ENCODE measurements at regions of chr18 and their contacts with region 1.

Region 1: DNA sequence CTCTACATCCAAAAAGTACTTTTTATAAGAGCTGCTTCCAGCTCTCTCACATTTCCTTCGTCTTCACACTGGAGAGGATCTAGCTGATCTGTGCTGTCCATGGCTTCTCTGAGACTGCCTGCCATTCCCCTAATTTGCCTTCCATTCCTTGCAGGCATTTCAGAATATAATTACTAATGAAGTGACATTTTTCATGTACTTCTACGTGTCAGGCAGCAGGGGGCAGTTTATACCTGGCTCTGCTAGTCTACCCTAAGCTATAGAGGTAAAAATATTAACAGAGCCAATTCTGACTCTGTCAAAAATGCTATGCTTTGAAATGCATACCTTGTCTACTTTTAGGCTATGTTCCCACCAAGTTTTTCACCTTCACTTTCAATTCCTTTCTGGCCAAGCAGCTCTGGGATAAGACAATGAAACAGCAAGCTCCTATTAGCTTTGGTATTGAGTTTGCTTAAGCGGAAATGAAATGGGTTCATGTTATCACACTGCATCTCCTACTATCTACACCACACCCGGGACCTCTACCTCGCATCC is 81.9 kb downstream of the MEP1B start:
- DNase-seq: peak; percentile 41
- ATAC-seq: peak; percentile 53
- H3K4me3 Mint-ChIP-seq: no peak overlapping the region
- H3K27ac Mint-ChIP-seq: no peak overlapping the region
- H3K4me1 Mint-ChIP-seq: no peaks in the 10 kb centered on the region
- H3K27me3 Mint-ChIP-seq: peaks cover 11% of the 10 kb centered on the region

Region 2: GRCh38 chr18:32086861-32087260 is 184.9 kb before region 1 on chr18:
- CTCF ChIA-PET with region 1: no interaction called
- POLR2A ChIA-PET with region 1: no interaction called
- intact Hi-C with region 1: no loop called
- DNase-seq: no peak
- ATAC-seq: no peak
- H3K4me3 Mint-ChIP-seq: no peak overlapping the region
- H3K27ac Mint-ChIP-seq: no peak overlapping the region
- H3K4me1 Mint-ChIP-seq: peaks cover 34% of the 10 kb centered on the region
- H3K27me3 Mint-ChIP-seq: no peaks in the 10 kb centered on the region

Region 3: DNA sequence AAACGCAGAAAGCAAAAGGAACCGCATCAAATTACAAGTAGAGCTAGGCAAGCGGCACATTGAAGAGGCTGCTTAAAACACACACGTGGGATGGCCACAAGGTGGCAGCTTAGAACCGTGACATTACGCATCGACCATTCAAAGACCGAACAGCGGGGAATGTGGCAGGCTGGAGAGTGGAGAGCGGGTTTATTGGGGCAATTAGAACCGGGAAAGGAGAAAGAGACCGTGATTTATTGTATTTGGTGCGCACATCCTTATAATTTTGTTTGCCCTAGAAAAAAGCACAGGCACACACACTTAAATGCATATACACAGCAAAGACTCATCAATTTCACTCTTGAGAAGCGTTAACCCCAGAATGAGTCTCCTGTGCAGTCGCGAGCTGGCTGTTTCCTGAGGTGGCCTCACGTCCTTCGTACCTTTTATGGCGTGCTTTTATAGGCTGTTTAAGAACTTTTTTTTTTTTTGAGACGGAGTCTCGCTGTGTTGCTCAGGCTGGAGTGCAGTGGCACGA is 113.6 kb before region 1 on chr18:
- CTCF ChIA-PET with region 1: interaction called, 12 read pairs
- POLR2A ChIA-PET with region 1: no interaction called
- intact Hi-C with region 1: loop called (anchors 5 to 10 kb)
- DNase-seq: peak; percentile 82
- ATAC-seq: peak; percentile 92
- H3K4me3 Mint-ChIP-seq: peak overlapping the region; percentile 54
- H3K27ac Mint-ChIP-seq: no peak overlapping the region
- H3K4me1 Mint-ChIP-seq: peaks cover 4% of the 10 kb centered on the region
- H3K27me3 Mint-ChIP-seq: peaks cover 7% of the 10 kb centered on the region

Region 4: DNA sequence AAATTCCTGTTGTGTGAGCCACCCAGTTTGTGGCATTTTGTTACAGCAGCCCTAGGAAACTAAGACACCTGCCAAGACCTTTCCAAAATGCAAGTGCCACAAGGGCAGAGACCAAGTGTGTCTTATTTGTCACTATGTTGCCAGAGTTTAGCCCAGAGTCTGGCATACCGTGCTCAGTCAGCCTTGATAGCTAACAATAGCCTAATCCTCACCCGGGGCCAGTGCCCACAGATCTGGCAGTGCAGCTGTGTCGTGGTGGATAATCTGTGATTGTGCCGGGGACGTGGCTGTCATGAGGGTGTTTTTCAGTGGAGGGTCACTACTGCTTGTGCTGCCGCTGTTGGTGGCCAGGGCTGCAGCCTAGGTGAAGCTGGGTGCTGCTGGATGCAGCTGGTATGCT is 28.4 kb before region 1 on chr18:
- CTCF ChIA-PET with region 1: no interaction called
- POLR2A ChIA-PET with region 1: no interaction called
- intact Hi-C with region 1: no loop called
- DNase-seq: no peak
- ATAC-seq: no peak
- H3K4me3 Mint-ChIP-seq: no peak overlapping the region
- H3K27ac Mint-ChIP-seq: no peak overlapping the region
- H3K4me1 Mint-ChIP-seq: no peaks in the 10 kb centered on the region
- H3K27me3 Mint-ChIP-seq: peaks cover 9% of the 10 kb centered on the region

Region 5: DNA sequence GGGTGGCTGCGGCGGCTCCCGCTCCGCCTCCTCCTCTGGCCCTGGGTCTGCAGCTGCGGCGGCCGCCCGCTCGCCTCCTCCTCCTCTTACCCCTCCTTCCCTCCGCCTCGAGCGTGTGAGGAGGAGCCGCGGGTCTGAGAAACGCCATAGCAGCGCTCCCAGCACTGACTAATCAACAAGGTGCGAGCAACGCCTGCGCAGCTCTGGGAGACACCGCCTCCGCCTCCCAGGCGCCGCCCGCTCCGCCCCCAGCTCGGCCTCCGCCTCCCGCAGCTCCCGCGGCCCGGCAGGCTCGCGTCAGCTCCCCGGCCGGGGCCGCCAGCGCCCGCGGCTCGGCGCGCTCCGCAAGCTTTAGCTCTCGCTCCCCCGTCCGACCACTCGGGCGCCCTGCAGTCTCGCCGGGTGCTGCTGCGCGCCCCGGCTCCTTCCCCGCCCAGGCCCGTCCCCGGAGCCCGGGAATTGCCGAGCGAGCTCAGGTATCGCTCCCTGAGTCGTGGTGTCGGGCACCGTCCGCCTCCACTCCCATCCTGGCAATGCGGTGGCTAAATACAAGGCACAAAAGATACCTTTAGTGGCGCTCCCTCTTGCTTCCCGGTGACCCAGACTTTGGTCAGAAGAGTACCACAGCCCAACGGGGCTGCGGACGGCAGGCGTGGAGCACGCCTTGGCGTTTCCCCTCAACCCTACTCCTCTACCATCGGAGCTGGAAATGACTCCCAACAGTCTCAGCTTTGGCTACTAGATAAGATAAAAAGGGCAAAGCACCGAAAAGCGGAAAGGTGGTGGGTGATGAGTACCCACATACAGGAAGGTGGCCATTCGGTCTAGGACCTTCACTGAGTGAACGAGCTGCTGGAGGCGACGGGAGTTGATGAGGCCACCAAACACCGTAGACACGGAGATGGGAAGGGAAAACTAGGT is 199.2 kb after region 1 on chr18 and contains the start of gene GAREM1:
- CTCF ChIA-PET with region 1: interaction called, 4 read pairs
- POLR2A ChIA-PET with region 1: no interaction called
- intact Hi-C with region 1: loop called in 1 of 2 experiments (anchors 5 kb)
- DNase-seq: peak; percentile 86
- ATAC-seq: peak; percentile 92
- H3K4me3 Mint-ChIP-seq: peak within 1 kb of the TSS; percentile 61
- H3K27ac Mint-ChIP-seq: no peak within 1 kb of the TSS
- H3K4me1 Mint-ChIP-seq: peaks cover 24% of the 10 kb centered on the region
- H3K27me3 Mint-ChIP-seq: peaks cover 37% of the 10 kb centered on the region
- total RNA-seq, gene GAREM1: not detected